Psoas muscle (tissue), 8 donors: ENCODE measurements at regions of chr3 and their contacts with region 1.

Region 1: DNA sequence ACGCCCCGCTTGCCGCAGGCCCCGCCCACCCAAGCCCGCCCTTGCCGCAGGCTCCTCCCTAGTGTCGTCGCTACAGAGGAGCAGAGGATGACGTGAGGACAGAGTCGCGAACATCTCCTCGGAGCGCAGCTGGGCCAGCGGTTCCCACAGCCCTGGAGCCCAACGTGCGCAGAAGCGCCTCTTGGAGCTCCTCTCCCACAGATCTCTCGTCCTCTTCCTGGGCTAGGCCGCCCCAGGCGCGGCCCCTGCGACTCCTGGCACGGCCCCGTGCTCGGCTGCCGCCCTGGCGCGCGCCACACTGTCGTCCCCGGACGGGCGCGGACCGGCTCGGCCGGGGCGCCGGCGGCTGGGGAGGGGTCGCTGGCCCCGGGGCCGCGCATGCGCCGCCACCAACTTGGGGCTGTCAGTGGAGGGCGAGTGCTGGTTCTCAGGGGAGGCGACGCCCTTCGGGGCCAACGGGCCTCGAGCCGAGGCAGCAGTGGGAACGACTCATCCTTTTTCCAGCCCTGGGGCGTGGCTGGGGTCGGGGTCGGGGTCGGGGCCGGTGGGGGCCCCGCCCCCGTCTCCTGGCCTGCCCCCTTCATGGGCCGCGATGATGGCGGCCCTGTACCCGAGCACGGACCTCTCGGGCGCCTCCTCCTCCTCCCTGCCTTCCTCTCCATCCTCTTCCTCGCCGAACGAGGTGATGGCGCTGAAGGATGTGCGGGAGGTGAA is at the start of gene TRPC1:
- DNase-seq: peak; percentile 71 to 82
- ATAC-seq: peak; percentile 77 to 92 (median 92)
- H3K4me3 ChIP-seq: peak within 1 kb of the TSS; percentile 73
- H3K27ac ChIP-seq: peak within 1 kb of the TSS; percentile 77
- H3K4me1 ChIP-seq: no peaks in the 10 kb centered on the region
- H3K27me3 ChIP-seq: peaks cover 0 to 36% (median 0%) of the 10 kb centered on the region in 3 donors
- CTCF ChIP-seq: no peak
- total RNA-seq, gene TRPC1: 0.78 to 2.1 (median 1.1) TPM

Region 2: GRCh38 chr3:142595951-142596725 is 128.0 kb before region 1 on chr3 and contains the start of gene PLS1:
- intact Hi-C with region 1: loop called in 1 of 2 experiments (anchors 10 kb)
- DNase-seq: peak; percentile 80 to 90
- ATAC-seq: peak; percentile 95 to 99 (median 98)
- H3K4me3 ChIP-seq: peak within 1 kb of the TSS; percentile 83
- H3K27ac ChIP-seq: peak within 1 kb of the TSS; percentile 39
- H3K4me1 ChIP-seq: peaks cover 3% of the 10 kb centered on the region
- H3K27me3 ChIP-seq: no peaks in the 10 kb centered on the region
- CTCF ChIP-seq: no peak
- total RNA-seq, gene PLS1: 0.24 to 0.58 (median 0.38) TPM

Region 3: GRCh38 chr3:142746646-142747045 is 22.5 kb after region 1 on chr3:
- intact Hi-C with region 1: no loop called
- DNase-seq: no peak
- ATAC-seq: no peak
- H3K4me3 ChIP-seq: no peak overlapping the region
- H3K27ac ChIP-seq: no peak overlapping the region
- H3K4me1 ChIP-seq: no peaks in the 10 kb centered on the region
- H3K27me3 ChIP-seq: no peaks in the 10 kb centered on the region
- CTCF ChIP-seq: no peak